Activated CD4-positive, alpha-beta T cell treated with anti-CD3 and anti-CD28 coated beads for 36 hours (primary cell): ENCODE measurements at regions of chr9 and their contacts with region 1.

Region 1: DNA sequence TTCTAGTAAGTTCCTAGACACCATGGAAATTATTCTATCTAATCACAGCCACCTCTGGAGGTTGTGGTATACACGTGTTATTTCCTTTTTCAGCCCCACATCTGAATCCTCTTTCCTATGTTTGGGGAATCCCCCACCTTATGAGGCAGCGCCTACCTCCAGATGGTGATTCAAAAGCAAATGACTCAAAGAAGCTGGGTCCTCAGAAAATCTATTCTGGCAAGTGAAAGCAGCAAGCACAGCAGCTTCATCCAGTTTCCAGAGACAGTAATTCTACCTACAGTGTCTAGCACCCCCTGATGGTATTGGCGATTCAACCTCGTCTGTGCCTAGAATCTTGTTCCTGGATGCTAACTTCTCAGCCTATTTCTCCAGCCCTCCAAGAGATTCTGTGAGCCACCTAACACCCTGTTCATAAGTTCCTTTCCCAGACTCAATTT is 43.0 kb downstream of the STRBP start:
- DNase-seq: peak; percentile 76
- ATAC-seq: peak; percentile 95
- H3K4me3 Mint-ChIP-seq: peak overlapping the region; percentile 27
- H3K27ac Mint-ChIP-seq: peak overlapping the region; percentile 86
- H3K4me1 Mint-ChIP-seq: peaks cover 30% of the 10 kb centered on the region
- H3K27me3 Mint-ChIP-seq: no peaks in the 10 kb centered on the region

Region 2: GRCh38 chr9:122402403-122402871 is 823.0 kb before region 1 on chr9:
- CTCF ChIA-PET with region 1: no interaction called
- POLR2A ChIA-PET with region 1: no interaction called
- intact Hi-C with region 1: loop called in 1 of 2 experiments (anchors 5 kb)
- DNase-seq: peak; percentile 76
- ATAC-seq: peak; percentile 96
- H3K4me3 Mint-ChIP-seq: peak overlapping the region; percentile 48
- H3K27ac Mint-ChIP-seq: peak overlapping the region; percentile 58
- H3K4me1 Mint-ChIP-seq: peaks cover 15% of the 10 kb centered on the region
- H3K27me3 Mint-ChIP-seq: peaks cover 19% of the 10 kb centered on the region

Region 3: DNA sequence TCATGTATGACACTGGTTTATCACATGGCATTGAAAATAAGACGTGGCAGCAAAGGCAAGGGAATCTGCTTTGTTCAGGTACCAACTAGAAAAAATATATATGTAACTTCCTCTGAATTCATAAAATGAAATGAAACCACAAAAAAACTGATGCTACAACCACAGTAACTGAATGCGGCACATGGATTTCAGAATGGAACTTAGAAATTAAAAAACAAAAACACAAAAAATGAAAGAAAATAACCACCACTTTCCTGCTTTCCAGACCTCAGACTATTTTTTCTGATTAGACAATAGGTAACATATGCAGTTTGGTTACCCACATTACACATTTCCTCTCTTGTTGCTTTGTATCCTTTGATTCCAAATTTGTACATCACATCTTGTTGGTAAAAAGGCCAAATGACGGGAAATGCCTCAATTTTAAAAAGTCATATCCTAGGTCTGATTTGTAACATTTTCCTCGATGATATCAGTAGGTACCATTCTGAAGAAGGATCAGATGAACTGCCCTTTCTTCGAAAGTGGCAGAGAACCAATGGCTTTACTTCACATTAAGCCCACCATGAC is 378.9 kb before region 1 on chr9:
- CTCF ChIA-PET with region 1: no interaction called
- POLR2A ChIA-PET with region 1: no interaction called
- intact Hi-C with region 1: loop called (anchors 10 kb)
- DNase-seq: no peak
- ATAC-seq: peak; percentile 48
- H3K4me3 Mint-ChIP-seq: no peak overlapping the region
- H3K27ac Mint-ChIP-seq: peak overlapping the region; percentile 92
- H3K4me1 Mint-ChIP-seq: peaks cover 34% of the 10 kb centered on the region
- H3K27me3 Mint-ChIP-seq: no peaks in the 10 kb centered on the region

Region 4: GRCh38 chr9:122991370-122991830 is 234.0 kb before region 1 on chr9:
- CTCF ChIA-PET with region 1: no interaction called
- POLR2A ChIA-PET with region 1: no interaction called
- intact Hi-C with region 1: loop called in 1 of 2 experiments (anchors 5 kb)
- DNase-seq: peak; percentile 66
- ATAC-seq: peak; percentile 90
- H3K4me3 Mint-ChIP-seq: no peak overlapping the region
- H3K27ac Mint-ChIP-seq: no peak overlapping the region
- H3K4me1 Mint-ChIP-seq: peaks cover 7% of the 10 kb centered on the region
- H3K27me3 Mint-ChIP-seq: no peaks in the 10 kb centered on the region

Region 5: GRCh38 chr9:123246534-123246933 is 21.1 kb after region 1 on chr9:
- CTCF ChIA-PET with region 1: interaction called, 6 read pairs
- POLR2A ChIA-PET with region 1: no interaction called
- intact Hi-C with region 1: loop called in 1 of 2 experiments (anchors 2 kb)
- DNase-seq: no peak
- ATAC-seq: no peak
- H3K4me3 Mint-ChIP-seq: no peak overlapping the region
- H3K27ac Mint-ChIP-seq: no peak overlapping the region
- H3K4me1 Mint-ChIP-seq: peaks cover 48% of the 10 kb centered on the region
- H3K27me3 Mint-ChIP-seq: no peaks in the 10 kb centered on the region

Region 6: GRCh38 chr9:123349691-123350480 is 124.5 kb after region 1 on chr9:
- CTCF ChIA-PET with region 1: interaction called, 14 read pairs
- POLR2A ChIA-PET with region 1: no interaction called
- intact Hi-C with region 1: no loop called
- DNase-seq: peak; percentile 79
- ATAC-seq: peak; percentile 85
- H3K4me3 Mint-ChIP-seq: no peak overlapping the region
- H3K27ac Mint-ChIP-seq: no peak overlapping the region
- H3K4me1 Mint-ChIP-seq: no peaks in the 10 kb centered on the region
- H3K27me3 Mint-ChIP-seq: peaks cover 9% of the 10 kb centered on the region

Region 7: DNA sequence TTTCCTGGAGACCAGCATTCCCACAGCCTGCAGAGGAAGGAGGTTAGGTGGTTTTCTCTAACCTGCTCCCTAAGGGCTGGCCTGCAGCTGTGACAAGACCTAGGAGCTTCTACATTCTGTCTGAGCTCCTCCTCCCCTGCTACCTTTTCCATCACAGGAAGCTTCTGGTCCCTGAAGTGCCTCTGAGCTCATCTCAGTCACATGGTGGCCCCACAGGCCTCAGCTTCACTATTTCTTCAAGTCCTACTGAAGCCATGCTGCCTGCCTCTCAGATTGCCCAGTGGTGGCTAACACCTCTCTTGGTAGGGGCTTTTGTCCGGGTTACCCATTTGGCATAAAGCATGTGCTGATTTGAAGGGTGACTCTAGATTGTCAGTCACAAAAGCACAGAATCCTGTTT is 390.0 kb after region 1 on chr9:
- CTCF ChIA-PET with region 1: no interaction called
- POLR2A ChIA-PET with region 1: no interaction called
- intact Hi-C with region 1: no loop called
- DNase-seq: peak; percentile 9
- ATAC-seq: no peak
- H3K4me3 Mint-ChIP-seq: no peak overlapping the region
- H3K27ac Mint-ChIP-seq: no peak overlapping the region
- H3K4me1 Mint-ChIP-seq: no peaks in the 10 kb centered on the region
- H3K27me3 Mint-ChIP-seq: no peaks in the 10 kb centered on the region